ENCODE measurements at regions of chr11 and their contacts with region 1.

Region 1: GRCh38 chr11:31487848-31488247 is 21.6 kb downstream of the IMMP1L start:
- DNase-seq: no peak
- ATAC-seq: no peak
- H3K4me3 ChIP-seq: no peak overlapping the region
- H3K27ac ChIP-seq: no peak overlapping the region
- H3K4me1 ChIP-seq: peaks cover 0 to 12% (median 0%) of the 10 kb centered on the region in 12 donors
- H3K27me3 ChIP-seq: no peaks in the 10 kb centered on the region
- CTCF ChIP-seq: peak in 11 of 12 donors; percentile 12 to 46 (median 30)
- POLR2A ChIP-seq: no peak

Region 2: DNA sequence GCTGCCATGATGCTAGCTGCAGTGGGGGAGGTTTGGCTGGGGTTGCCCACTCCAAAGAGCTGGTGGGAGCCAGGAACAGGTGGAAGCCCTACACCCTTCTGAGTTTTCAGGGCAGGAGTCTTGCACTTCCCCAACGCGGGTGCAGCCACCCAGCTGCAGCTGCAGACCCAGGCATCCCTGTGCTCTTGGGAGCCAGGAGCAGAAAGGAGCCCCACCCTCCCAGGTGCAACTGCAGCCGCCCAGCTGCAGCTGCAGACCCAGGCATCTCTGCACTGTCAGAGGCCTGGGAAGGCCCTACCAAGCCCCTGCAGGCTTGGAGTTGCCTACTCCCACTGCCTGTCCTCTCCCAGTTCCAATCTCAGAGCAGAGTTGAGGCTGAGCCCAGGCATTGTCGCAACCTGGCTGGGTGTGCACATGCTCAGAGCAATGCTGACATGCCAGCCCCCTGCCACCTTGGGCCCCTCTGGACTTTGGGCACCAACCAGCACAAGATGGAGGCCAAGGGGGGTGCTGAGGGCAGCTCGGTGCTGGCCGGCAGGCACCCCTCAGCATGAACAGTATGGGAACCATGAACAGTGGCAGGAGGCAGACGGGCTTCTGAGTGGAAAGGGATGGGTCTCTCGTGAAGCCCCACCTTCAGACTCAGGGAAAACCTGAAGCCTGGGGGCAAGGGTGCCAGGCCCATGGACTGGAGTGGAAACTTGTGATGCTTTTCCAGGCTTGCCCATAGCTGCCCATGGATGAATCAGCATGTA is 313.7 kb before region 1 on chr11:
- intact Hi-C with region 1: no loop called
- DNase-seq: no peak
- ATAC-seq: no peak
- H3K4me3 ChIP-seq: no peak overlapping the region
- H3K27ac ChIP-seq: no peak overlapping the region
- H3K4me1 ChIP-seq: no peaks in the 10 kb centered on the region
- H3K27me3 ChIP-seq: no peaks in the 10 kb centered on the region
- CTCF ChIP-seq: no peak
- POLR2A ChIP-seq: no peak

Region 3: DNA sequence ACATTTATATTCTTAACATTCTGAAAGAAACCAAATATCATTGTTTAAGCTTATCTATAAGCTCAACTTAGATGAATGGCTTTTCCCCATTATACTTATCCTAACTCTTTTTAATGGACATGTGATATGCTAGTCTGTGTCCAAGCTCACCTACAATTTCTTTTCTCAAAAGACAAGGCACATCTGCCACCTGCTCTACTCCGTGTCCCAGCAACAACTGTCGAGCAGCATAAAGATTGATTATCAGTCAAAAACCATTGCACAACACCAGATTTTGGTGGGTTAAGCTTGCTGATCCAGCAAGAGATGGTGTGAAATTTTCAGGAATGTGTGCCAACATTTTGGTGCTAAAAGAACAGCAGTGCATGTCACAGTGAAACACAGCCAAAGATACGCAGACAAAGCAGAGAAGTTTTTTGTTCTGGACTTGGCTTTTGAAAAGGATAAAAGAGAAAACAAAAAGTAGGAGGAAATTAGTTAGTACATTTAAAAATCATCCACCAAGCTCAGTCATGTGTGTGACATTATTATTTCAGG is 184.1 kb before region 1 on chr11:
- intact Hi-C with region 1: no loop called
- DNase-seq: no peak
- ATAC-seq: no peak
- H3K4me3 ChIP-seq: no peak overlapping the region
- H3K27ac ChIP-seq: no peak overlapping the region
- H3K4me1 ChIP-seq: no peaks in the 10 kb centered on the region
- H3K27me3 ChIP-seq: no peaks in the 10 kb centered on the region
- CTCF ChIP-seq: no peak
- POLR2A ChIP-seq: no peak

Region 4: DNA sequence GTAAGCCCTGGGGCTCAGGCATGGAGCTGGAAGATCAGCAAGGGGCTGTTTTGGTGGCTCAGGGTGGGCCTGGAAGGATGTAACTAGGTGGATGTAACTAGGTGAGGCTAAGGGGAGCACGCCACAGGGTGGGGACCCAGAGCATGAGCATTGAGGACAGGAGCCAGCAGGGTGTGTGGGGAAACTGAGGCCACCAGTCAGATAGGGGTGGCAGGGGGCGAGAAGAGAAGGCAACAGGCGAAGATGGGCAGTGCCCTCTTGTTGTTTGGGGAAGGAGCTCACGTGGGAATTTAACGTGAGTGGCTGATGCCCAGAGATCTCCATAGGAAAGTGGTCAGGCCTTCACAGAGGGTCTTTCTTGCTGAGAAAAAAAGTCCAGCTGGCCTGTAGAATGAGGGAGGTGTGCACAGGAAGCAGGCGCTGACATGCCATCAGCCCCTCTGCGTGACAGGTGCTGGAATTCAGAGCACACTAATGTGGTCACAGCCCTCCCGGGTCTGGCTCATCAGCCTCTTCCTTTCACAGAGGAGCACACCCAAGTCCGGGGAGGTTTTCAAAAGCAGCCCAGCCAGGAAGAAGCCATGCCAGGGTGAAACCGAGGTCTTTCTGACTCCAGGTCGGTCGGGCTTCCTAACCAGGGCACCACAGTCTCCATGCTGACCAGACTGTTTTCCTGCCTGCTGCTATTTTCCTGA is 377.9 kb after region 1 on chr11:
- intact Hi-C with region 1: loop called in 4 of 10 experiments (anchors 10 kb)
- DNase-seq: no peak
- ATAC-seq: no peak
- H3K4me3 ChIP-seq: no peak overlapping the region
- H3K27ac ChIP-seq: no peak overlapping the region
- H3K4me1 ChIP-seq: peaks cover 0 to 2% (median 0%) of the 10 kb centered on the region in 12 donors
- H3K27me3 ChIP-seq: peaks cover 0 to 47% (median 2%) of the 10 kb centered on the region in 9 donors
- CTCF ChIP-seq: no peak
- POLR2A ChIP-seq: no peak

Region 5: GRCh38 chr11:31870609-31871309 is 382.9 kb after region 1 on chr11:
- intact Hi-C with region 1: loop called in 4 of 10 experiments (anchors 10 kb)
- DNase-seq: peak in 4 of 5 donors; percentile 13 to 39 (median 34)
- ATAC-seq: peak in 3 of 4 donors; percentile 45 to 67 (median 50)
- H3K4me3 ChIP-seq: no peak overlapping the region
- H3K27ac ChIP-seq: no peak overlapping the region
- H3K4me1 ChIP-seq: peaks cover 0 to 5% (median 0%) of the 10 kb centered on the region in 12 donors
- H3K27me3 ChIP-seq: peaks cover 0 to 55% (median 6%) of the 10 kb centered on the region in 9 donors
- CTCF ChIP-seq: peak; percentile 39 to 71 (median 62)
- POLR2A ChIP-seq: no peak

Region 6: GRCh38 chr11:31958076-31958735 is 470.4 kb after region 1 on chr11:
- intact Hi-C with region 1: loop called in 4 of 10 experiments (anchors 5 kb)
- DNase-seq: peak; percentile 60 to 82 (median 63)
- ATAC-seq: peak; percentile 74 to 92 (median 81)
- H3K4me3 ChIP-seq: no peak overlapping the region
- H3K27ac ChIP-seq: no peak overlapping the region
- H3K4me1 ChIP-seq: peaks cover 0 to 5% (median 0%) of the 10 kb centered on the region in 12 donors
- H3K27me3 ChIP-seq: no peaks in the 10 kb centered on the region
- CTCF ChIP-seq: peak; percentile 64 to 86 (median 78)
- POLR2A ChIP-seq: no peak

Region 7: DNA sequence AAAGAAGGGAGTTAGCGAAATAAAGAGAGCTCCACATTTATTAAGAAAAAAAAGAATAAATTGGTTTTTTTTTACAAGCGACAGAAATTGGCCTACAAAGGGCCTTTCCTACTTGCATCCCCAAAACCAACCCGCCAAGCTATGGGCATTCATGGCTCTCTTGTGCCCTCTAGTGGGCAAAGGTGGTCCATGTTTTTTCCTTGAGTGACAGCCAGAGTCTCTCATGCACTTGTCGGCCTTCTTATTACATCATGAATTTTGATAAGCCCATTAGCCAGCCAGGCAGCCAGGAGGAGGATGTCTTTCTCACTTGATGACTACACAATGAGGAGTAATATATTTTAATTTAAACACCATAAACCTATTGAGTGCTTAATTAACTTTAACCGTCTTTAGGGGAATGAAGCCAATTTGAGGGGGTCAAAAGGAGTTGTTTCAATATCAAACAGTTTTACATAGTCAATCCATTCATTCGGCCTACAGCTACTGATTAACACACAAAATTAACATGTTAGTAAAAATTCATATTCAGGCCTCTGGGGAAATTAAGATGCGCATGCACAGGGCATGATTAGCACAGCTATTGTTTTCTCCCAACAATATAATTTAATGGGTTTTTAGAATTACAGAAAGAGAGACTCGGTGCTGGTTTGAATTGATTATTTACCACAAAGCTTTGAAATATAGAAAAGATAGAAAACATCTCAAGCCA is 688.5 kb after region 1 on chr11:
- intact Hi-C with region 1: loop called in 1 of 10 experiments (anchors 10 kb)
- DNase-seq: peak in 4 of 5 donors; percentile 54 to 70 (median 66)
- ATAC-seq: peak in 3 of 4 donors; percentile 62 to 78 (median 74)
- H3K4me3 ChIP-seq: no peak overlapping the region
- H3K27ac ChIP-seq: no peak overlapping the region
- H3K4me1 ChIP-seq: peaks cover 0 to 9% (median 0%) of the 10 kb centered on the region in 12 donors
- H3K27me3 ChIP-seq: peaks cover 0 to 7% (median 0%) of the 10 kb centered on the region in 9 donors
- CTCF ChIP-seq: peak; percentile 82 to 96 (median 88)
- POLR2A ChIP-seq: no peak

Measured in heart left ventricle (tissue), 16 donors.